ENCODE measurements at regions of chr14 and their contacts with region 1.

Region 1: GRCh38 chr14:69153131-69153872 is 383 bp upstream of the DCAF5 start:
- DNase-seq: peak; percentile 93
- H3K4me3 Mint-ChIP-seq: peak overlapping the region; percentile 90
- H3K27ac Mint-ChIP-seq: no peak overlapping the region
- H3K4me1 Mint-ChIP-seq: peaks cover 20% of the 10 kb centered on the region
- H3K27me3 Mint-ChIP-seq: no peaks in the 10 kb centered on the region
- CTCF ChIP-seq: no peak

Region 2: DNA sequence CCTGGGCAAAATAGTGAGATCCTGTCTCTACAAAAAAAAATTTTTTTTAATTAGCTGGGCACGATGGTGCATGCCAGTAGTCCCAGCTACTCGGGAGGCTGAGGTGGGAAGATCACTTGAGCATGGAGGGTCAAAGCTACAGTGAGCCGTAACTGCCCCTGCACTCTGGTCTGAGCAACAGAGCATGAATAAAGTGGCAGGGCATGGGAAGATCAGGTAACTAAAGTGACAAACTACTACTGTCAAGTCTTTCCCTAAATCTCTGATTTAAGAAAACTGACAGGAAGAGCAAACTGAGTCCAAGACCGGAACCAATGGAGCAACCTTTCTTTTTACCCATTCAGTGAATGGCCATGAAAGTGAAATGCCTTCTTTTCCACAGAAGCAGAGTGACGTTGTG is 11.2 kb before region 1 on chr14:
- CTCF ChIA-PET with region 1: interaction called, 3 read pairs
- POLR2A ChIA-PET with region 1: interaction called, 77 read pairs
- intact Hi-C with region 1: no loop called
- DNase-seq: no peak
- H3K4me3 Mint-ChIP-seq: no peak overlapping the region
- H3K27ac Mint-ChIP-seq: no peak overlapping the region
- H3K4me1 Mint-ChIP-seq: peaks cover 22% of the 10 kb centered on the region
- H3K27me3 Mint-ChIP-seq: no peaks in the 10 kb centered on the region
- CTCF ChIP-seq: no peak

Region 3: GRCh38 chr14:69281450-69282169 is 128.3 kb after region 1 on chr14:
- CTCF ChIA-PET with region 1: no interaction called
- POLR2A ChIA-PET with region 1: no interaction called
- intact Hi-C with region 1: no loop called
- DNase-seq: no peak
- H3K4me3 Mint-ChIP-seq: no peak overlapping the region
- H3K27ac Mint-ChIP-seq: no peak overlapping the region
- H3K4me1 Mint-ChIP-seq: no peaks in the 10 kb centered on the region
- H3K27me3 Mint-ChIP-seq: peaks cover 20% of the 10 kb centered on the region
- CTCF ChIP-seq: no peak

Region 4: GRCh38 chr14:70130482-70130881 is 977.2 kb after region 1 on chr14:
- CTCF ChIA-PET with region 1: no interaction called
- POLR2A ChIA-PET with region 1: no interaction called
- intact Hi-C with region 1: no loop called
- DNase-seq: no peak
- H3K4me3 Mint-ChIP-seq: no peak overlapping the region
- H3K27ac Mint-ChIP-seq: no peak overlapping the region
- H3K4me1 Mint-ChIP-seq: no peaks in the 10 kb centered on the region
- H3K27me3 Mint-ChIP-seq: peaks cover 76% of the 10 kb centered on the region
- CTCF ChIP-seq: no peak